Dendritic cell treated with granulocyte-macrophage colony-stimulating factor and Interleukin-4, amounts not matched to agents 40 ng/mL and 50 ng/mL, for 4 days (primary cell): ENCODE measurements at regions of chr9 and their contacts with region 1.

Region 1: GRCh38 chr9:136118320-136119060 is at the start of gene TMEM250:
- H3K4me3 Mint-ChIP-seq: peak within 1 kb of the TSS; percentile 76
- H3K27ac Mint-ChIP-seq: peak within 1 kb of the TSS; percentile 82
- H3K4me1 Mint-ChIP-seq: peaks cover 49% of the 10 kb centered on the region
- H3K27me3 Mint-ChIP-seq: peaks cover 5% of the 10 kb centered on the region

Region 2: GRCh38 chr9:135524130-135524861 is 594.2 kb before region 1 on chr9:
- intact Hi-C with region 1: no loop called
- H3K4me3 Mint-ChIP-seq: no peak overlapping the region
- H3K27ac Mint-ChIP-seq: no peak overlapping the region
- H3K4me1 Mint-ChIP-seq: no peaks in the 10 kb centered on the region
- H3K27me3 Mint-ChIP-seq: peaks cover 9% of the 10 kb centered on the region

Region 3: GRCh38 chr9:135864447-135865049 is 253.9 kb before region 1 on chr9:
- intact Hi-C with region 1: loop called (anchors 5 kb)
- H3K4me3 Mint-ChIP-seq: no peak overlapping the region
- H3K27ac Mint-ChIP-seq: no peak overlapping the region
- H3K4me1 Mint-ChIP-seq: no peaks in the 10 kb centered on the region
- H3K27me3 Mint-ChIP-seq: no peaks in the 10 kb centered on the region

Region 4: GRCh38 chr9:135971892-135972291 is 146.6 kb before region 1 on chr9:
- intact Hi-C with region 1: loop called (anchors 1 kb)
- H3K4me3 Mint-ChIP-seq: no peak overlapping the region
- H3K27ac Mint-ChIP-seq: no peak overlapping the region
- H3K4me1 Mint-ChIP-seq: peaks cover 51% of the 10 kb centered on the region
- H3K27me3 Mint-ChIP-seq: peaks cover 12% of the 10 kb centered on the region

Region 5: DNA sequence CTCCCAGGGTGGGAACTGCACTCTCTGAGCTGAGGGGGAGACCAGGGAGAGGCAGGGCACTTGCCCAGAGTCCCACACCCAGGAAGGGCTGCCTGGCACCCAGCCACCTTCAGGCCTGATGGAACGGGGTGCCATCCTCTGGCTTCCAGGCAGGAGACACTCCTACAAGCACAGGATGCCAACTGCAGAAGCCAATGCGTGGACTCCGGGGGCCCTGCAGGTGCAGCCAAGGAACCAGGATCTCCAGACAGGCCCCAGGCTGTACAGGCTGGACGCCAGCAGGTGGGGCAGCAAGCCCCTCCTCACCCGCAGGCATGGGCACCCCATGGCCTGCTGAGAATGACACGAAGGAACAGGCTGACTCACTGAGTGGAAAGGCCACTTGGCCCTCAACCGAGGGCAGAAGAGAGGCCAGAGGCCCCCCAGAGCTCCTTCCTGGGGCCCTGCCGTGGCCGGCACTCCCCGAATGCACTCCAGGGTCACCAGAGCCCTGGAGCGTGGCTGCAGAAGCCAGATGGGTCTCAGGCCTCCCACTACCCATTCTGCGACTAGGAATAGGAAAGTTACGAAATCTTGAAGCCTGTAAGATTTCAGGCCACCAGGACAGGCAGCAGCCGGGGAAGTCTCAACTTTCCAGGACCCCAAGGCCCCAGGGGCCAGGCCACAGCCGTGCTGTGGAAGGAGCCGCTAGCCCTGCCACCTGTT is 39.1 kb before region 1 on chr9:
- intact Hi-C with region 1: loop called (anchors 5 kb)
- H3K4me3 Mint-ChIP-seq: no peak overlapping the region
- H3K27ac Mint-ChIP-seq: peak overlapping the region; percentile 54
- H3K4me1 Mint-ChIP-seq: peaks cover 89% of the 10 kb centered on the region
- H3K27me3 Mint-ChIP-seq: no peaks in the 10 kb centered on the region

Region 6: DNA sequence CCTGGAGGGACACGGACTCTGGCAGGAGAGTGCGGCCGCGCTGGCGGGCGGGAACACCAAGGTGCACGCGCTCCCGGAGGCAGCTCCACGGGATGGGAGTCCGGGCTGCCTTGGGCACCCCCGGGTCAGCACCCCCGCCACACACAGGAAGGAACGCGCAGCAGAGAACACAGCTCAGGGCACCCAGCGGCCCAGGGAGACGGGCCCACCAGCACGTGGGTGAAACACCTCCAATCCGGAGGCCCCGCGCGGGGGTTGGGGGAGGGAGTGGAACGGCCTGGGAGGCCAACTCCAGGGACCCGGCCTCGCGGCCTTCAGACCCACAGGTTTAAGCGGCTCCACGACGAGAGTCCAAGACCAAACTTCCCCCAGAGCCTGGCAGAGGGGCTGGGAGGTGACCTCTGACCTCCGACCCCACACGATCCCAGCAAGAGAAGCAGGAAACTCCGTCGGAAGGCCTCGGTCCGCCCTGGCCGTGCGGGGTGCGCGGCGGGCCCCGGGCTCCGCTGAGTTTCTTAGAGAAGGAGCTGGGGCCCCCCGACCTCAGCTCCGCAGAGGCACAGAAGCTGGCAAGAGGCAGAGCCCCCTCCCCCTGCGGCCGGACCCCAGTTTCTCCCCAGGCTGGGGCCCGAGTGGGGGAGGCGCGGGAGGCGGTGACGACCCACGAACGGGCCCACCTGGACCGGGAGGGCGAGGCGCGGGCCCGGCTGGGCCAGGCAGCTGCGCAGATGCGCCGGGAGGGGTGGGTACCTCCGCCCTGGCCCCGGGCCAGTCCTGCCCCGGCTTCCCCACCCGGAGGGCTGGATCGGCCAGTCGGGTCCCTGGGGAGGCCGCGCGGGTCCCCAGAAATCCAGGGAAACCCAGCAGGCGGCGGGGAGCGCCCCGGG is 24.3 kb before region 1 on chr9:
- intact Hi-C with region 1: loop called (anchors 2 kb)
- H3K4me3 Mint-ChIP-seq: peak overlapping the region; percentile 86
- H3K27ac Mint-ChIP-seq: peak overlapping the region; percentile 79
- H3K4me1 Mint-ChIP-seq: peaks cover 65% of the 10 kb centered on the region
- H3K27me3 Mint-ChIP-seq: peaks cover 21% of the 10 kb centered on the region

Region 7: DNA sequence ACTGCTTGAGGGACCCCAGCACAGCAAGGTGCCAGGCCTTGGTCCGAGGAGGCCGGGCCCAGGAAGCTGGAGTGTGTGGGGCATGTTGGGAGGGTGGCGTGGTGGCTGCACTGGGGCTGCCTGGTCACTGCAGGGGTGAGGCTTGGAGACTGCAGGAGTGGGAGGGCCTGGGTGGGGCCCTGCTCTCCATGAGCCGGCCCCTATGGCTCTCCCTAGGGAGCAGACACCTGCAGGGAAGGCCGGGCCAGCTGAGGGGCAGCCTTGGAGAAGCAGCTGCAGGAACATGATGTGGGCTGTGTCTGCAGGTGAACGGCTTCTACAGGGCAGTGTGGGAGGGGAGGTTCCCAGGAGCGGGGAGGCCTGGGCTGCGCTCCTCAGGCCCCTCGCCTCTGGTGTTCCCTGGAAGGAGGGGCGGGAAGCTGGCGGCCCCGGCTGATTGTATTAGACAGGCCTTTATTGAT is 41.9 kb after region 1 on chr9:
- intact Hi-C with region 1: no loop called
- H3K4me3 Mint-ChIP-seq: no peak overlapping the region
- H3K27ac Mint-ChIP-seq: no peak overlapping the region
- H3K4me1 Mint-ChIP-seq: no peaks in the 10 kb centered on the region
- H3K27me3 Mint-ChIP-seq: peaks cover 19% of the 10 kb centered on the region